Ovary (tissue), 10 donors: ENCODE measurements at regions of chr9 and their contacts with region 1.

Region 1: DNA sequence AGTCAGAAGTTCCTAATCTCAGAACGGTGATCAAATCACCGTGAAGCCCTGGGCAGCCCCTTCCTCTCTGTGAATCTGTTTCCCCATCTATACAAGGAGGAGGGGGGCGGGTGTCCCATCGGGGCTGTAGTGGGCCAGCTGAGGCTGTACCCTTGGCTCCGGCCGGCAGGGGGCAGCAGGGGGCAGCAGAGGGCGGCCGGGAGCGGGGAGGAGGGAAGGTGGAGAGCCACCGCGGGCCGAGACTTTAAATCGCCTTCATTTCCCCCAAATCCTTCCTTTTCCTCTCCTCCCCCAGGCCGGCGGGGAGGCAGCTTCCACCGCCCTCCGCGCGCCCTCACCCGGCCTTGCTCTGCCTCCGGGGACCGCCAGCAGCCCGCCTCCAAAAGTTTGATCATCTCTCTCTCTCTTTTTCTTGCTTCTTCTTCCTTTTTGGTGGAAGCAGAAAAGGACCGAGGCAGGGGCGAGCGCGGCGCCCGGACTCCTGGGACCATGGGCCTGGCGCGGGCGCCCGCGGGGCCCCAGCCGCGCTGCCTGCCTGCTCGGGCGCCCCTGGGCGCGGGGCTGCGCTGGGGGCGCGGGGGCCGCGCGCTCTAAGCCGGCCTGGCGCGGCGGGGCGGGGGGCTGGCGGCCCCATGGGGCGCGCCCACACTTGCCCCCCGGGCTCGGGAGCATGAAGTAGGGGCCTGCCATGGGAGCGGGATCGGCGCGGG is at the start of gene COL27A1:
- DNase-seq: peak; percentile 82 to 93 (median 91)
- H3K4me3 ChIP-seq: peak within 1 kb of the TSS; percentile 68
- H3K27ac ChIP-seq: peak within 1 kb of the TSS; percentile 68 to 89
- H3K4me1 ChIP-seq: peaks cover 3% of the 10 kb centered on the region
- H3K27me3 ChIP-seq: no peaks in the 10 kb centered on the region
- CTCF ChIP-seq: peak; percentile 91 to 92 (median 91)
- EP300 ChIP-seq: no peak
- POLR2A ChIP-seq: no peak
- total RNA-seq, gene COL27A1: 7.1 to 91.2 (median 19.8) TPM

Region 2: DNA sequence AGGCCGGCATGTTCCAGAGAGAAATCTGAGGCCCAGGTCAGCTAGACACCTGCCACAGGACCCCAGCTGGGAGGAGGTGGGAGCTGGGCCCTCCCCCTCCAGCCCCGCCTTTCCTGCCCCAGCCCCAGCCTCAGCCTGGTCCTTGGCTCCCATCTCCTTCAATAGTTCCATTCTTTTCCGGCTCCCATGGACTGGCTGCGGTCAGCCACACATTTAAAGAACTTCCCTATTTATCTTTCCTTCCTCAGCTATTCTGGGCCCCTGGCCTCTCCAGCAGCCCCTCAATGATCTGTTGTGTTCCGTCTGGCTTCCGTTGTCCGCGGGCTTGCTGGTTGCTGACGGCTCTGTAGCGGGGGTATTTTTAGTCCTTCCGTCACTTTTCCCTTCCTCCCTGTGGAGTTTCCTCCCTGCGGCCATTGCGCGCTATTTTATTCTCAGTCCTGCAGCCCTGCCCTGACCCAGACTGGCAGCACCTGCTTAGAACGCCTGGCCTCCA is 151.1 kb before region 1 on chr9:
- intact Hi-C with region 1: no loop called
- DNase-seq: peak in 4 of 5 donors; percentile 7 to 34 (median 24)
- H3K4me3 ChIP-seq: no peak overlapping the region
- H3K27ac ChIP-seq: no peak overlapping the region
- H3K4me1 ChIP-seq: peaks cover 6% of the 10 kb centered on the region
- H3K27me3 ChIP-seq: no peaks in the 10 kb centered on the region
- CTCF ChIP-seq: no peak
- EP300 ChIP-seq: no peak
- POLR2A ChIP-seq: no peak

Region 3: DNA sequence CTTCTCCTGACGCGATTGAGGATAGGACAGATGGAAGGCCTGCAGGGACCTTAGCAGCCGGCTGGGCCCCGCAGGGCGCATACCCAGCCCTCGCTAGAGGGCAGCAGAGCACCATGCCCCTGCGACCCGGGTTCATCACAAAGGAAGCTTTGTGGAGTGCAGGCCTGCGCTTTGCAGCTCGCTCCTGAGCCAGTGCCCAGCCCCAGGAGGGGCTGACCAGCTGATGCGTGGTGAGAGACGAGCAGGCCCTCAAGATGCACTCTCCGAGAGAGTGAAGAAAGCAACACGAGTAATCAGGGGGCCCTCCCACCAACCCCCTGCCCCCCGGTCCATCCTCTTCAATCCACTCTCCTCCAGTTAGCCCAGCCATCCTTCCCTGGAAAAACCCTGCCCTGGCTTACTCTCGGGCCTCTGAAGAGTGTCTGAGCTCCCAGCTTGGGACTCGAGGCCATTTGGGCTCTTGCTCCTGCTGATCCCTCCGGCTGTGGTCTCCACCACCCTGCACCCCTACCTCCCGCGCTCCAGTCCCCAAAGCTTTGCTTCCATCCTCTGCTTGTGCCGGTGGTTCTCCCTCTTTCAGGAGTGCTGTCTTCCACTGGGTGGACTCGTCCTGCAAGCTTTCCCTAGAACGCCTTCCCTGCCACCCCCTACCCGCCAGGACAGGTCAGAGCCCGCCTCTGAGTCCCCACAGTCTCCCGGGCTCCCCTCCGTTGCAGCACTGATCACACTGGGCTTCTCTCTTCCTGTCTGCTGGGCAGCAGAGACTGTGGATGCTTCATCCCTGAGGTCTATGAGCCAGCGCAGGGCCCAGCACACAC is 47.2 kb before region 1 on chr9:
- intact Hi-C with region 1: loop called in 3 of 4 experiments (anchors 5 to 10 kb)
- DNase-seq: peak; percentile 55 to 87 (median 73)
- H3K4me3 ChIP-seq: no peak overlapping the region
- H3K27ac ChIP-seq: no peak overlapping the region
- H3K4me1 ChIP-seq: no peaks in the 10 kb centered on the region
- H3K27me3 ChIP-seq: no peaks in the 10 kb centered on the region
- CTCF ChIP-seq: peak; percentile 43 to 62 (median 54)
- EP300 ChIP-seq: no peak
- POLR2A ChIP-seq: no peak

Region 4: GRCh38 chr9:114131808-114132549 is 23.4 kb before region 1 on chr9:
- intact Hi-C with region 1: no loop called
- DNase-seq: peak in 1 of 5 donors; percentile 44
- H3K4me3 ChIP-seq: no peak overlapping the region
- H3K27ac ChIP-seq: no peak overlapping the region
- H3K4me1 ChIP-seq: peaks cover 3% of the 10 kb centered on the region
- H3K27me3 ChIP-seq: no peaks in the 10 kb centered on the region
- CTCF ChIP-seq: no peak
- EP300 ChIP-seq: no peak
- POLR2A ChIP-seq: no peak

Region 5: DNA sequence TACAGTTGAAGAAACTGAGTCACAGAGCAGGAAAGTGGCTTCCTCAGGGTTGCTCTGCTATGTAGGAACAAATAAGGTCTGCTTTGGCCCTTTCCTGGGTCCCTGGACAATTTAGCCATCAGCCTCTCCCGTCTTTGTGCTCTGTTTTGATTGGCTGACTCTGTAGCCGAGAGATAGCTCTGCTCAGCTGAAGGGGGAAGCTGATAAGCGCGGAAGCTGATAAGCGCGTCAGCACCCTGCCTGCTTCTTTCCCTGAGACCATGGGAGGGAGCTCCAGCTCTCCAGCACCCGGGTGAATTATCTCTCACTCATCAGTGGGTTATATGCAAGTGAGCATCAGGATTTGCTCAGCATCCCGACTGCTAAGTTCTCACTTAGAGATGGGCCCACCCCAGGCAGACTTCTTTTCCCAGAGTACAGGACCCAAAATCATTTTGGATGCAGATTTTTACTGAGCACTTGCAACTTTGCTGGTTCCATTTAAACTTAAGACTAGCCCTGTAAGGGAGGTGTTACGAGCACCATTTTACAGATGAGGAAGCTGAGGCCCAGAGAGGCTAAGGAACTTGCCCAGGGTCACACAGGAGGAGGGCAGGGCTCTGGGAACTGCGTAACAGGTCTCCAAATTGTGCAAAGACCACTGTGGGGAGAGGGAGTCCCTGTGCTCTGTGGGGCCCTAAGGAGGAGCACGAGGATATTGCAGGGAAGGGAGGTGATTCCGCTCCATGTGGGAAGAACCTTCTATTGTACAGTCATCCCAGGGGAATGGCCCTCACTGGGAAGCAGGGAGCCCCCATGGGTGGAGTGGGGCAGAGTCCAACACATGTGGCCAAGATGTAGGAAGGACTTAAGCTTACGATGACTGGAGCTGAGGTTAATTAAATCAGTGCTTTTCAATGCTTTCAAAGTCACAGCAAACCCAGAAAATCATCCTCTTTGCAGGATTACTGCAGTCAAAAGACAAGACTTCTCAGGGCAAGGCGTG is 83.8 kb after region 1 on chr9:
- intact Hi-C with region 1: loop called in 2 of 4 experiments (anchors 5 to 10 kb)
- DNase-seq: no peak
- H3K4me3 ChIP-seq: no peak overlapping the region
- H3K27ac ChIP-seq: no peak overlapping the region
- H3K4me1 ChIP-seq: peaks cover 16% of the 10 kb centered on the region
- H3K27me3 ChIP-seq: no peaks in the 10 kb centered on the region
- CTCF ChIP-seq: no peak
- EP300 ChIP-seq: no peak
- POLR2A ChIP-seq: no peak

Region 6: DNA sequence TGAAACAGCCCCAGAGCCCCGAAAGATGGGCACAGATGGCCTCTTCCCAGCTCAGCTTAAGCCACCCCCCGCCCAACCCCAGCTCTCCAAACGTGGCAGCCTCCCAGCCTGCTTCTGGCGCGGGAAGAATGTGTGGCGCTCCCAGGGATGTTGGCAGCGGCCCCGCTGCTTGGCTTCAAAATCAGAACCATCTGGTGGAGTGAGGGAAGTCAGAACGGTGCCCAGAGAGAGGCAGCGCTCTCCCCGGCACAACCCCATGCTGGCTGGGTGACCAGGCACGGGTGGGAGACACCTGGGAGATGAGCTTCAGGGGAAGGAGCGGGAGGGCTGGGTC is 94.8 kb after region 1 on chr9:
- intact Hi-C with region 1: loop called in 1 of 4 experiments (anchors 10 kb)
- DNase-seq: peak; percentile 68 to 90 (median 83)
- H3K4me3 ChIP-seq: no peak overlapping the region
- H3K27ac ChIP-seq: peak overlapping the region in 1 of 2 donors; percentile 23
- H3K4me1 ChIP-seq: no peaks in the 10 kb centered on the region
- H3K27me3 ChIP-seq: no peaks in the 10 kb centered on the region
- CTCF ChIP-seq: no peak
- EP300 ChIP-seq: no peak
- POLR2A ChIP-seq: no peak

Region 7: GRCh38 chr9:114282926-114283325 is 127.5 kb after region 1 on chr9:
- intact Hi-C with region 1: loop called (anchors 1 to 5 kb)
- DNase-seq: peak; percentile 14 to 38 (median 31)
- H3K4me3 ChIP-seq: no peak overlapping the region
- H3K27ac ChIP-seq: no peak overlapping the region
- H3K4me1 ChIP-seq: peaks cover 14% of the 10 kb centered on the region
- H3K27me3 ChIP-seq: no peaks in the 10 kb centered on the region
- CTCF ChIP-seq: no peak
- EP300 ChIP-seq: no peak
- POLR2A ChIP-seq: no peak

Region 8: DNA sequence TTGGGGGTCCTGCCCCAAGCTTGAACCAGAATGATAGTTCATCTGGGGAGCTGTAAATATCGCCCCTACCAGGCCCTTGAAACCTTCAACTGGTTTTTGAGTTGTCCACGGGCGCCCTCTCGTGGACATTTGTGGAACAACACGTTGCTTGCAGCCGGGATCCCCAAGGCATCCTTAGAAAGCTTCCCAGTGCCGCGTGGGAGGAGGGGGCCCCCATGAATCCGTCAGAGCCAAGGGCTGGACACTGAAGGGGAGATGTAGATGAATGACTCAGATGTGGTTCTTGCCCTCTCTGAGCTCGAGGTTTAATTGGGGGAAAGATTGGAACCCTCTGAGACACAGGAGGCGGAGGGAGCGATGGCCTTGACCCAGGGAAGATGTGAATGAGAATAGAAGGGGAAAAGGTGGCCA is 135.7 kb after region 1 on chr9:
- intact Hi-C with region 1: loop called in 3 of 4 experiments (anchors 1 to 5 kb)
- DNase-seq: peak; percentile 63 to 88 (median 83)
- H3K4me3 ChIP-seq: no peak overlapping the region
- H3K27ac ChIP-seq: no peak overlapping the region
- H3K4me1 ChIP-seq: no peaks in the 10 kb centered on the region
- H3K27me3 ChIP-seq: no peaks in the 10 kb centered on the region
- CTCF ChIP-seq: peak; percentile 85 to 94 (median 92)
- EP300 ChIP-seq: no peak
- POLR2A ChIP-seq: no peak

Region 9: DNA sequence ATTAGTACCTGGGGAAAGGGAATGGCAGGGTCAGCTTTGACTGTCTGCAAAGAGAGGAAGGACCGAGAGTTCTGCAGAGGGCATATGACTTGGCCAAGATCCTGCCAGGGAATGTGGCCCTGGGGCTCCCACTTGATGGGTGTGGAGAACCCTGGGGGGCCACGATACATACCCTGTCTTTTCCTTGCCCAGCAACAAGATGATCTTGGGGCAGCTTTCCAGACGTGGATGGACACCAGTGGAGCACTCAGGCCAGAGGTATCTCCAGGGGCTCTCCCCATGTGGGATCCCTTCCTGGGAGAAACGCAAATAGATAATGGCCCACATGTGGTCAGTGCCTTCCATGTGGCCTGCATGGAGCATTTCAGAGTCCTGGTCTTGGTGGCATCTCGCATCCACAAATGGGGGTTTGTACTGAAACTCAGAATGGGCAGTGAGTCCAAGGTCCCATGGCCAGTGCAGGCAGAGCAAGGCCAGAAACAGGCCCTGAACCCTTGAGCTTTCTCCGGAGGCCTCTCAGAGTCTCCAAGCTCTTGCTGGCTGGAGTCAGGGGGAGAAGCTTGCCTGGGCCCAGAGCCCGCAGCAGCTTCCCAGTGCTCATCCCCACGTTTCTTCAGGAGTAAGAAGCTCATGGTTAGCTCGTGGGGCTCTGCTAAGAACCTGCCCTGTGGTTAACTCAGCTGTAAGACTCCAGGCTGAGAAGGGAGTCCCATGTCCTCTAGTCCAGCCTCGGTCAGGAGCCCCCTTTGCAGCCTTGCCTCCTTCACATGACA is 149.2 kb after region 1 on chr9:
- intact Hi-C with region 1: loop called in 1 of 4 experiments (anchors 5 kb)
- DNase-seq: peak in 4 of 5 donors; percentile 7 to 30 (median 16)
- H3K4me3 ChIP-seq: no peak overlapping the region
- H3K27ac ChIP-seq: peak overlapping the region in 1 of 2 donors; percentile 50
- H3K4me1 ChIP-seq: peaks cover 6% of the 10 kb centered on the region
- H3K27me3 ChIP-seq: no peaks in the 10 kb centered on the region
- CTCF ChIP-seq: no peak
- EP300 ChIP-seq: no peak
- POLR2A ChIP-seq: no peak